ENCODE measurements at regions of chr1 and their contacts with region 1.

Region 1: GRCh38 chr1:179293340-179294327 is at the start of gene SOAT1:
- DNase-seq: peak; percentile 98
- ATAC-seq: peak; percentile 100
- total RNA-seq, gene SOAT1: 10.4 TPM

Region 2: GRCh38 chr1:179081687-179082332 is 211.8 kb before region 1 on chr1 and contains the start of gene TOR3A:
- intact Hi-C with region 1: loop called (anchors 2 kb)
- DNase-seq: peak; percentile 96
- ATAC-seq: peak; percentile 99
- total RNA-seq, gene TOR3A: 11.3 TPM

Region 3: DNA sequence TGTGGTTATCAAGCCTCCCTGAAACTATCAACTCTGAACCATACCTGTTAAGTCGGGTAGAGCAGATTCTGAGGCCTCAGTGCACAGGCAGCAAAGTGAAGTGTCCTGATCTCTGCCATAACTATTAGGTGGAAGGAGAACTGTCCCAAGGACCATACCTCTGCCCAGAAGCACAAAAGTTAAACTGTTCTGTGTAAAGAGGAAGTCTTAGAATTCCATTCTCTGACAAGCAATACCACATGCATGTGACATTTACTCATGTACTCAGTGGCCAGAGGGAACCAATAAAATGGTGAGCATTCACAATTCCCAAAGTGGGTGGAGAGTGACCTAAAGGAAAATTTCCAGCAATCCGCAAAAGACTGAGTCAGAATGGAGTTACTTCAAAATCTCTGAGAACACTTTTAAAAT is 150.7 kb before region 1 on chr1:
- intact Hi-C with region 1: loop called (anchors 5 kb)
- DNase-seq: no peak
- ATAC-seq: no peak

Region 4: DNA sequence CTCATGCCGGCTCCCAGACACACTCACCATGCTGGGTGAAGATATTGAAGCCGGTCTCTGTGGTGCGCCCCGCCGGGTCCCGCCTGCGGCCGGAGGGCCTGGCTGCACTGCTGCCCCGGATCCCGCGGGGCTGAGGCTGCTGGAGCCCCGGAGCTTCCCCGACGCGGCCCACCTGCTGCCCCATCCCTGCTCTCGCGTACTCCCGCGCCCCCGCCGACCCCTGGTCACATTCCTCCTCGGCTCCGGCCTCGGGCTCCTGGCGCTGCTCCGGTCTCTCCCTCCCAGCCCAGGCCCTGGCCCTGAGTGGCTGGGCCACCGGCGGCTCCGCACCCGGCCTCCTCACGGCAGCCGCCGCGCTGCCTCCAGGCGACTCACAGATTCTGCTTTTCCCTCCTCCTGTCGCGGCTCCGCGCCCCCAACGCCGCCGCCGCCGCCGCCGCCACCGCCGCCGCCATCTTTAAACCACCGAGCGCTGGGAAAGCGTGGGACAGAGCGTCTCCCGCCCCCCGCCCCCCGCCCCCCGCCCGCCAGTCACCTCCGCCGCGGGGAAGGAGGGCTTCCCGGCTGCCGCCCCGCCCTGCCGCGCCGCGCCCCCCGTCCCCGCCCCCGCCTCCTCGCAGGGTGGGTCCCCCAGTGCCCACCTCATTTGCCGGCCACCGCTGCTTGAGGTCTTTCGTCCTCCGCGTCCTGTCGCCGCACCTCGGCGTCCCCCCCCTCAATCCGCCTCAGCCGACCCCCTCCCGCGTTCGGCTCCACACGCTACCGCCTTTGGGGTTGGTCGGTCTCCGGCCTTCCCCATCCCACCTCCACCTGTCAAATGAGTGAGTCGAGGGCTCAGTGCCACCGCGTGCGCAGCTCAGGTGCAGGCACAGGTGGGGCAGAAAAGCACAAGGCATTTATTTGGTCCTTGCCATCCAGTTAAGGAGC is 64.2 kb before region 1 on chr1 and contains the start of gene ABL2:
- intact Hi-C with region 1: loop called (anchors 5 kb)
- DNase-seq: peak; percentile 78
- ATAC-seq: peak; percentile 84
- total RNA-seq, gene ABL2: 8.5 TPM

Region 5: GRCh38 chr1:179365320-179366092 is 71.9 kb after region 1 on chr1 and contains the start of gene AXDND1:
- intact Hi-C with region 1: loop called (anchors 5 kb)
- DNase-seq: peak; percentile 95
- ATAC-seq: peak; percentile 96
- total RNA-seq, gene AXDND1: not detected

Measured in Right ventricle myocardium inferior (tissue), 1 donor.